ENCODE measurements at regions of chr3 and their contacts with region 1.

Region 1: GRCh38 chr3:129934234-129935123 is 40.0 kb upstream of the TRH start:
- DNase-seq: peak in 2 of 3 donors; percentile 35 to 42
- ATAC-seq: peak; percentile 35
- H3K4me3 ChIP-seq: no peak overlapping the region
- H3K4me1 ChIP-seq: no peaks in the 10 kb centered on the region
- CTCF ChIP-seq: peak; percentile 77

Region 2: DNA sequence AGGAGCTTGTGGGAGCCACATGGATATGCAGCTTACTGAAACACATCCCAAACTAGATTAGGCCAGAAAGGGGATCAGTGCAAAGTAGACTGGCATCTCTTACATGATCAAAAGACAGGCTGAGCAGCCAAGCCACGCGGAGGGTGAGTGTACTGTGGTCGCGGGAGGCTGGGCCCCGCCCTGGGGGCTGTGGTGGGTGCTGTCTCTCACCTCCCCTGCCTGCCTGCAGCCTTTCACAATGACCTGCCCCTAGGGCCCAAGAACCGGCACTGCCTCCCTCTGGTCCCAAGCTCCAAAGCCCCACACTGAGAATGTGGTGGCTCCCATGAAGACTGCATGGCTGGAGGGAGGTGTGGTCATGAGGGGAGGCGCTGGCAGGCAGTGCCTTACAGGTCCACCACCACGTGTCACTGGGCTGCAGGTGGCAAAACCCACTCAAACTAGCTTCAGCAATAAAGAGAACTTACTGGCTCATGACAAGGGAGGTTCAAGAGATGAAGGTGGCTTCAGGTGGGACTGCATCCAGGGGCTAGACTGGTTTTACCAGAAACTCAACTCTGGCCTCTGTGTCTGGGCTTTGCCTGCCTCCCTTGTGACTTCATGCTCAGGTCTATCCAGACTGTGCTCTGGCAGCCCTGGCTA is 300.6 kb before region 1 on chr3:
- intact Hi-C with region 1: loop called in 1 of 2 experiments (anchors 10 kb)
- DNase-seq: no peak
- ATAC-seq: no peak
- H3K4me3 ChIP-seq: no peak overlapping the region
- H3K4me1 ChIP-seq: no peaks in the 10 kb centered on the region
- CTCF ChIP-seq: no peak

Region 3: GRCh38 chr3:129650256-129650872 is 284.1 kb before region 1 on chr3:
- intact Hi-C with region 1: loop called in 1 of 2 experiments (anchors 5 kb)
- DNase-seq: peak in 2 of 3 donors; percentile 39 to 82
- ATAC-seq: peak; percentile 69
- H3K4me3 ChIP-seq: no peak overlapping the region
- H3K4me1 ChIP-seq: no peaks in the 10 kb centered on the region
- CTCF ChIP-seq: peak; percentile 14

Measured in mucosa of descending colon (tissue), 3 donors.